ENCODE measurements at regions of chr1 and their contacts with region 1.

Region 1: DNA sequence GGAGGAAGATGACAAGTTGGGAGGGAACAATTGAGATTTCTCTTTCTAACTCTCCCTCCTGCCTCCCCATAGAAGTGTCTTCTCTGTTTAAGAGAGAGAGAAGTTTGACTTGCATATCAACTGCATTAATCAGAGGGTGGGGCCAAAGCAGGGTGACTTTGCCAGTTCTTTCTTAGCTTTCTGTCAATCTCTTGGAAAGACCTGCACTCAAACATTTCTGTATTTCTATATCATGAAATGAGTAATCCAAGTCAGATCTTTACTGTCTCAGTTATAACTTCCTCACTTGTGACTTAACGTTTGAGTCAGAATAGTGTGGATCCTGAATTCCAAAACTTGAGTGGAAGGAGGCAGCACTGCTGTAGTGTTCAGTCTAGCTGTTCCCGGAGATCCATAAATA is 180.8 kb upstream of the KCNK2 start:
- DNase-seq: peak; percentile 78
- ATAC-seq: peak; percentile 69
- H3K4me3 ChIP-seq: no peak overlapping the region
- H3K27ac ChIP-seq: no peak overlapping the region
- H3K4me1 ChIP-seq: peaks cover 7% of the 10 kb centered on the region; the same call in 1 of the 2 replicates
- H3K27me3 ChIP-seq: no peaks in the 10 kb centered on the region
- CTCF ChIP-seq: no peak
- POLR2A ChIP-seq: no peak
- RAD21 ChIP-seq: no peak

Region 2: DNA sequence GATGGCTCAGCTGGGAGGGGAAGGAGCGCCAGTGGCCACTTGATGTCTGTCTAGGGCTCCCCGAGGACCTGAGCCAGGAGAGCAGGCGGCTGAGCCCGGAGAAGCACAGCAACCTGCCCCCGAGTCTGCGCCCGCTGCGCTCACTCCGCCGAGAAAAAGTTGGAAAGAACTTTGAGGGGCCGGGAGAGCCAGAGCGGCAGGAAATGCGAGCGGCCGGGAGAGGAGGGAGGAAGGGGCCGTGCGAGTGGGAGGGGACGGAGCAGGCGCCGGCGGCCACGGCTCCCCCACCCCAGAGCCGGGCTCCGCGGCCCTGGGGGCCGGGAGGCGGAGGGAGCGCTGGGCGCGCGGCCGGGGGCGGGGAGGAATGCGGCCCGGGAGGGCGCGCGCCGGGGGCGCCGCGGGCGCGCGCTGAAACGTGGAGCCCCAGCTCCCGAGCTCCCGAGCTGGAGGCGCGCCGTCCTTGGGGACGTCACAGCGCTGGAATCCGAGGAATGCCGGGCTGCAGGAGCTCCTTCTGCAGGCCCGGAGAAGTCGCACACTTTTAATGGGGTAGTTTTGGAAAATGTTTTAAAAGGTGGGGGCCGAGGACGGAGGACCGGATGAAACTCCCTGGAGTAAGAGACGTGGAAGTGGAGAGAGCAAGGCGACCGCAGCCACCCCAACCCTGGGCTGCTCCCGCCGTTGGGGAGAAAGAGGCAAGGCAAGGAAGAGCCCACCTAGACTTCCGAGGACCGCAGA is 350.1 kb before region 1 on chr1 and contains the start of gene PTPN14:
- CTCF ChIA-PET with region 1: no interaction called
- POLR2A ChIA-PET with region 1: no interaction called
- dilution Hi-C with region 1: no loop called
- in situ Hi-C with region 1: no loop called
- intact Hi-C with region 1: no loop called
- DNase-seq: peak; percentile 96
- ATAC-seq: peak; percentile 88
- H3K4me3 ChIP-seq: peak within 1 kb of the TSS; percentile 76
- H3K27ac ChIP-seq: peak within 1 kb of the TSS; percentile 97
- H3K4me1 ChIP-seq: peaks cover 6% of the 10 kb centered on the region
- H3K27me3 ChIP-seq: no peaks in the 10 kb centered on the region
- CTCF ChIP-seq: peak; percentile 59
- POLR2A ChIP-seq: peak; percentile 81
- RAD21 ChIP-seq: peak; percentile 37; the same call in 1 of the 2 replicates
- total RNA-seq, gene PTPN14: 31.7 and 42.8 TPM in 2 replicates

Region 3: GRCh38 chr1:214791961-214792360 is 109.8 kb before region 1 on chr1:
- CTCF ChIA-PET with region 1: no interaction called
- POLR2A ChIA-PET with region 1: no interaction called
- dilution Hi-C with region 1: no loop called
- in situ Hi-C with region 1: no loop called
- intact Hi-C with region 1: loop called (anchors 5 kb)
- DNase-seq: peak; percentile 50
- ATAC-seq: peak; percentile 91
- H3K4me3 ChIP-seq: no peak overlapping the region
- H3K27ac ChIP-seq: no peak overlapping the region
- H3K4me1 ChIP-seq: 0 out of 2 replicates have a peak, but pooled peaks cover 2% of the 10 kb centered on the region
- H3K27me3 ChIP-seq: no peaks in the 10 kb centered on the region
- CTCF ChIP-seq: no peak
- POLR2A ChIP-seq: no peak
- RAD21 ChIP-seq: no peak

Measured in IMR-90 (cell line).